ENCODE measurements at regions of chr3 and their contacts with region 1.

Region 1: GRCh38 chr3:108090701-108091451 is at the start of gene CD47:
- DNase-seq: peak; percentile 93 to 99 (median 97)
- ATAC-seq: peak; percentile 70
- H3K4me3 ChIP-seq: peak within 1 kb of the TSS; percentile 91 to 93
- H3K4me3 Mint-ChIP-seq: peak within 1 kb of the TSS; percentile 98
- H3K27ac ChIP-seq: peak within 1 kb of the TSS; percentile 93 to 94
- H3K27ac Mint-ChIP-seq: peak within 1 kb of the TSS; percentile 99
- H3K4me1 ChIP-seq: peaks cover 51% of the 10 kb centered on the region
- H3K4me1 Mint-ChIP-seq: peaks cover 39% of the 10 kb centered on the region
- H3K27me3 ChIP-seq: no peaks in the 10 kb centered on the region
- H3K27me3 Mint-ChIP-seq: no peaks in the 10 kb centered on the region
- CTCF ChIP-seq: no peak
- total RNA-seq, gene CD47: 118 to 125 TPM

Region 2: DNA sequence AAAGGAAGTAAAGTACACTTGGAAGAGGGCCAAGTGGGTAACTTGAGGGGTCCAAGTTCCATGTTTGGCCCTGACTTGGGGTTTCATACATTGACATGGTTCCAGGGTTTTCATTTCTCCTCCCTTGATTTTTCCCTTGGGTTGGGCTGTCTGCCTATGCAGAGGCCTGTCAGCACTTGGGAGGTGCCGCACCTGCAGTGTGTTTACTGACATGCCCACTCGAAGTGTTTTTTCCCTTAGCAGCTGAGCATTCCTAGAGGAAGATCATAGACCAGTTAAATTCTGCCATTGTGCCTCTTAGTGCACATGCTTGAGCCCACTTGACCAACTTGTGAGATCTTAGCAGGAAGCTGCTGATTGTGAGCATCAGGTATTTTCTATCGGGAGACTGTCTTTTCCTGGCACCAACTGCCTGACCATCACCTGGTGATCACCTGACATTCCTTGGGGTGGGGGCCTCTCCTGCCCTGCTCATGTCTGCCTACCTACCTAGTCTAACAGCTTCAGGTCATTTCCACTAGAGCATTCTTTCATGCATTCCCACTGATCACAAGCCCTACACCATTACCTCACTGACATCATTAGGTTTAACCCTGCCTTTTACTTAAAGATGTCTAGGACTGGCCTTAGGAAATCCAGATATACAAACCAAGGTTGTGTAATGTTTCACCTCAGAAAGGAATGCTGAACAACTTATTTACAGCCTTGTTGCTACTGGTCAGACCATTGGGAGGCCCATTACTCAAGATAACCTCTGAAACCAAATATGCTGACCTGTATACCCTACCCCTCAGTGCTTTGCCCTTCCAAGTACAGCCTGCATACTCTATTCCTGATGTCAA is 68.4 kb before region 1 on chr3:
- CTCF ChIA-PET with region 1: no interaction called
- POLR2A ChIA-PET with region 1: no interaction called
- intact Hi-C with region 1: no loop called
- DNase-seq: no peak
- ATAC-seq: no peak
- H3K4me3 ChIP-seq: no peak overlapping the region
- H3K4me3 Mint-ChIP-seq: no peak overlapping the region
- H3K27ac ChIP-seq: no peak overlapping the region
- H3K27ac Mint-ChIP-seq: no peak overlapping the region
- H3K4me1 ChIP-seq: no peaks in the 10 kb centered on the region
- H3K4me1 Mint-ChIP-seq: peaks cover 5% of the 10 kb centered on the region
- H3K27me3 ChIP-seq: no peaks in the 10 kb centered on the region
- H3K27me3 Mint-ChIP-seq: no peaks in the 10 kb centered on the region
- CTCF ChIP-seq: no peak

Region 3: GRCh38 chr3:108073764-108074431 is 17.0 kb before region 1 on chr3:
- CTCF ChIA-PET with region 1: interaction called, 6 read pairs
- POLR2A ChIA-PET with region 1: interaction called, 4 read pairs
- intact Hi-C with region 1: loop called in 1 of 2 experiments (anchors 2 kb)
- DNase-seq: no peak
- ATAC-seq: no peak
- H3K4me3 ChIP-seq: no peak overlapping the region
- H3K4me3 Mint-ChIP-seq: no peak overlapping the region
- H3K27ac ChIP-seq: no peak overlapping the region
- H3K27ac Mint-ChIP-seq: peak overlapping the region; percentile 42
- H3K4me1 ChIP-seq: peaks cover 58% of the 10 kb centered on the region
- H3K4me1 Mint-ChIP-seq: peaks cover 74% of the 10 kb centered on the region
- H3K27me3 ChIP-seq: no peaks in the 10 kb centered on the region
- H3K27me3 Mint-ChIP-seq: no peaks in the 10 kb centered on the region
- CTCF ChIP-seq: no peak

Region 4: GRCh38 chr3:108100906-108101660 is 10.2 kb after region 1 on chr3:
- CTCF ChIA-PET with region 1: interaction called, 4 read pairs
- POLR2A ChIA-PET with region 1: interaction called, 6 read pairs
- intact Hi-C with region 1: loop called in 1 of 2 experiments (anchors 1 kb)
- DNase-seq: peak in 4 of 9 experiments; percentile 33 to 73 (median 52)
- ATAC-seq: peak; percentile 74
- H3K4me3 ChIP-seq: no peak overlapping the region
- H3K4me3 Mint-ChIP-seq: peak overlapping the region; percentile 4
- H3K27ac ChIP-seq: no peak overlapping the region
- H3K27ac Mint-ChIP-seq: peak overlapping the region; percentile 86
- H3K4me1 ChIP-seq: peaks cover 36% of the 10 kb centered on the region
- H3K4me1 Mint-ChIP-seq: peaks cover 60% of the 10 kb centered on the region
- H3K27me3 ChIP-seq: no peaks in the 10 kb centered on the region
- H3K27me3 Mint-ChIP-seq: no peaks in the 10 kb centered on the region
- CTCF ChIP-seq: no peak

Region 5: GRCh38 chr3:108589146-108589997 is 498.5 kb after region 1 on chr3 and contains the starts of genes CIP2A and DZIP3:
- CTCF ChIA-PET with region 1: no interaction called
- POLR2A ChIA-PET with region 1: no interaction called
- intact Hi-C with region 1: loop called (anchors 2 kb)
- DNase-seq: peak; percentile 71 to 96 (median 81)
- ATAC-seq: peak; percentile 79
- H3K4me3 ChIP-seq: peak within 1 kb of the TSS; percentile 90 to 93
- H3K4me3 Mint-ChIP-seq: peak within 1 kb of the TSS; percentile 97
- H3K27ac ChIP-seq: peak within 1 kb of the TSS; percentile 91 to 98
- H3K27ac Mint-ChIP-seq: peak within 1 kb of the TSS; percentile 99
- H3K4me1 ChIP-seq: peaks cover 14% of the 10 kb centered on the region
- H3K4me1 Mint-ChIP-seq: peaks cover 31% of the 10 kb centered on the region
- H3K27me3 ChIP-seq: no peaks in the 10 kb centered on the region
- H3K27me3 Mint-ChIP-seq: no peaks in the 10 kb centered on the region
- CTCF ChIP-seq: no peak
- total RNA-seq, gene CIP2A: 3.0 to 4.2 TPM
- total RNA-seq, gene DZIP3: 8.7 to 9.4 TPM

Measured in CD8-positive, alpha-beta T cell (primary cell).